HEK293 (cell line): ENCODE measurements at regions of chr1 and their contacts with region 1.

Region 1: GRCh38 chr1:226293553-226293920 is 15.4 kb downstream of the LIN9 start:
- H3K4me3 ChIP-seq: no peak overlapping the region
- H3K27ac ChIP-seq: no peak overlapping the region
- H3K4me1 ChIP-seq: peaks cover 4% of the 10 kb centered on the region
- CTCF ChIP-seq: no peak

Region 2: GRCh38 chr1:226519716-226520598 is 226.4 kb after region 1 on chr1:
- CTCF ChIA-PET with region 1: no interaction called
- POLR2A ChIA-PET with region 1: no interaction called
- H3K4me3 ChIP-seq: no peak overlapping the region
- H3K27ac ChIP-seq: no peak overlapping the region
- H3K4me1 ChIP-seq: no peaks in the 10 kb centered on the region
- CTCF ChIP-seq: peak; percentile 25; the same call in 1 of the 2 replicates

Region 3: GRCh38 chr1:227234998-227235405 is 941.5 kb after region 1 on chr1:
- CTCF ChIA-PET with region 1: no interaction called
- POLR2A ChIA-PET with region 1: interaction called, 10 read pairs
- H3K4me3 ChIP-seq: no peak overlapping the region
- H3K27ac ChIP-seq: no peak overlapping the region
- H3K4me1 ChIP-seq: no peaks in the 10 kb centered on the region
- CTCF ChIP-seq: peak; percentile 24; the same call in 1 of the 2 replicates